Ascending aorta (tissue), 2 donors: ENCODE measurements at regions of chr10 and their contacts with region 1.

Region 1: GRCh38 chr10:63106111-63106755 is 26.9 kb upstream of the NRBF2 start:
- DNase-seq: no peak
- H3K4me3 ChIP-seq: no peak overlapping the region
- H3K27ac ChIP-seq: no peak overlapping the region
- H3K4me1 ChIP-seq: no peaks in the 10 kb centered on the region
- H3K27me3 ChIP-seq: no peaks in the 10 kb centered on the region
- CTCF ChIP-seq: no peak

Region 2: GRCh38 chr10:62870866-62871265 is 235.4 kb before region 1 on chr10:
- intact Hi-C with region 1: no loop called
- DNase-seq: no peak
- H3K4me3 ChIP-seq: no peak overlapping the region
- H3K27ac ChIP-seq: no peak overlapping the region
- H3K4me1 ChIP-seq: no peaks in the 10 kb centered on the region
- H3K27me3 ChIP-seq: no peaks in the 10 kb centered on the region
- CTCF ChIP-seq: no peak

Region 3: GRCh38 chr10:63084690-63085382 is 21.4 kb before region 1 on chr10:
- intact Hi-C with region 1: no loop called
- DNase-seq: no peak
- H3K4me3 ChIP-seq: no peak overlapping the region
- H3K27ac ChIP-seq: peak overlapping the region in 1 of 2 donors; percentile 6
- H3K4me1 ChIP-seq: peaks cover 0 to 8% of the 10 kb centered on the region in 2 donors
- H3K27me3 ChIP-seq: no peaks in the 10 kb centered on the region
- CTCF ChIP-seq: no peak

Region 4: DNA sequence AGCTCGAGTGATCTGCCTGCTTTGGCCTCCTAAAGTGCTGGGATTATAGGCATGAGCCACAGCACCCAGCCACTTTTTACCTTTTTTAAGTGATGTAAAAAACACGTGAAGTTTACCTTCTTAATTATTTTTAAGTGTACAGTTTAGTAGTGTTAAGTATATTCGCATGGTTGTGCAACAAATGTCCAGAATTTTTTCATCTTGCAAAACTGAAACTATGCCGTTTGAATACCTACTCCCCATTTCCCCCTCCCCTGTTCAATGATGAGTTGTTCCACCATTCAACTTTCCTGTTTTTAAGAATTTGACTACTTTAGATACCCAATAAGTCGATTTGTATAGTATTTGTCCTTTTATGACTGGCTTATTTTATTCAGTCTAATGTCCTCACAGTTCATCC is 37.8 kb after region 1 on chr10:
- intact Hi-C with region 1: loop called (anchors 5 kb)
- DNase-seq: no peak
- H3K4me3 ChIP-seq: no peak overlapping the region
- H3K27ac ChIP-seq: no peak overlapping the region
- H3K4me1 ChIP-seq: no peaks in the 10 kb centered on the region
- H3K27me3 ChIP-seq: no peaks in the 10 kb centered on the region
- CTCF ChIP-seq: no peak

Region 5: DNA sequence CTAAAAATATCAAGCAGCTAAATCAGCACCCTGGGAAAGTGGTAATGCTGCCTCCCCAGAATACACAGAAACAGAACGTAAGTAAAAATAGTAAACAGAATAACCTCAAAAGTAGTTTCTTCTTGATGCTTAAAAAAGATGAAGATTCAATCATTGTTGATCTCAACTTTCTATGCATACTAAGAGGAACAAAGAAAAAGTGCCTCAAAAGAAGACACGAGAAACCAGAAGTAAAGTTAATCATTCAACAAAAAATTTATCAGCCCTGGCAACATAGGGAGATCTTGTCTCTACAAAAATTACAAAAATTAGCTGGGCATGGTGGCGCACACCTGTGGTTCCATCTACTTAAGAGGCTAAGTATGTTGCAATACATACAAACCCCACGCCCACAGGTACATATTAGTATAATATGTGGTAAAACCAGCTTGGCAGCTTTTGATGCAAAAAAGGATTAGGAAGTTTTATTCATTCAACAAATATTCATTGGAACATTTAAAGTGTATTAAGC is 180.6 kb after region 1 on chr10:
- intact Hi-C with region 1: no loop called
- DNase-seq: no peak
- H3K4me3 ChIP-seq: no peak overlapping the region
- H3K27ac ChIP-seq: no peak overlapping the region
- H3K4me1 ChIP-seq: peaks cover 0 to 3% of the 10 kb centered on the region in 2 donors
- H3K27me3 ChIP-seq: no peaks in the 10 kb centered on the region
- CTCF ChIP-seq: no peak